ENCODE measurements at regions of chr22 and their contacts with region 1.

Region 1: GRCh38 chr22:20156611-20157429 is 6.0 kb upstream of the CCDC188 start:
- DNase-seq: peak; percentile 46
- H3K4me3 ChIP-seq: no peak overlapping the region
- H3K27ac ChIP-seq: no peak overlapping the region
- H3K4me1 ChIP-seq: peaks cover 9% of the 10 kb centered on the region
- H3K27me3 ChIP-seq: no peaks in the 10 kb centered on the region
- CTCF ChIP-seq: peak; percentile 91 to 98

Region 2: GRCh38 chr22:20268279-20269012 is 111.6 kb after region 1 on chr22 and contains the start of gene RTN4R:
- CTCF ChIA-PET with region 1: no interaction called
- dilution Hi-C with region 1: no loop called
- in situ Hi-C with region 1: no loop called
- intact Hi-C with region 1: loop called (anchors 1 kb)
- DNase-seq: peak; percentile 41
- H3K4me3 ChIP-seq: peak within 1 kb of the TSS; percentile 59 to 60 (median 60)
- H3K27ac ChIP-seq: no peak within 1 kb of the TSS
- H3K4me1 ChIP-seq: peaks cover 6% of the 10 kb centered on the region
- H3K27me3 ChIP-seq: no peaks in the 10 kb centered on the region
- CTCF ChIP-seq: peak; percentile 34 to 56
- total RNA-seq, gene RTN4R: 3.8 to 10.5 TPM

Region 3: DNA sequence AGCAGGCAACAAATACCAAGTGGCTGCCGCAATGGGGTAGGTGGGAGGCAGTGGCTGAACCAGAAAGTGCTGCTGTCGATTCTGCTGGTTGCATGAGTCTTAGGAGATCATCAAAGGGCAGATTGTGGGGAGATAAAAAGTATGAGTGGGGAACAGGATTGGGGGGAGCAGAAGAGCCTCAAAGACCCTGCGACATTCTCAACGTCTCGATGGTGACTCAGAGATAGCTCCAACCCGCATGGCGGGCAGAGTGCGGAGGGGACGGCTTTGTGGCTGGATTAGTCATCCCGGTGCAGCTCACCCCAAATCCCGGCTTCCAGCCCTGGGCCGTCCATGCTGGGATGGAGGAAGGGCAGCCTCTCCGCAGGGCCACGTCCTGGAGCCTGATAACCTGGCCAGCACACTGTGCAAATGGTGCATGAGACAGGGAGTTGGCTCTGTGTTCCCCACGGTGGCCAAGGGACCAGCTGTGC is 122.9 kb after region 1 on chr22:
- CTCF ChIA-PET with region 1: no interaction called
- dilution Hi-C with region 1: no loop called
- in situ Hi-C with region 1: loop called in 1 of 2 experiments (anchors 5 kb)
- intact Hi-C with region 1: no loop called
- DNase-seq: no peak
- H3K4me3 ChIP-seq: no peak overlapping the region
- H3K27ac ChIP-seq: no peak overlapping the region
- H3K4me1 ChIP-seq: no peaks in the 10 kb centered on the region
- H3K27me3 ChIP-seq: no peaks in the 10 kb centered on the region
- CTCF ChIP-seq: no peak

Region 4: GRCh38 chr22:20298803-20299735 is 142.2 kb after region 1 on chr22:
- CTCF ChIA-PET with region 1: no interaction called
- dilution Hi-C with region 1: no loop called
- in situ Hi-C with region 1: loop called in 1 of 2 experiments (anchors 10 kb)
- intact Hi-C with region 1: no loop called
- DNase-seq: peak; percentile 77
- H3K4me3 ChIP-seq: peak overlapping the region; percentile 37 to 50 (median 44)
- H3K27ac ChIP-seq: no peak overlapping the region
- H3K4me1 ChIP-seq: no peaks in the 10 kb centered on the region
- H3K27me3 ChIP-seq: no peaks in the 10 kb centered on the region
- CTCF ChIP-seq: no peak

Region 5: GRCh38 chr22:20456064-20456721 is 299.4 kb after region 1 on chr22:
- CTCF ChIA-PET with region 1: no interaction called
- dilution Hi-C with region 1: no loop called
- in situ Hi-C with region 1: no loop called
- intact Hi-C with region 1: loop called (anchors 1 kb)
- DNase-seq: peak; percentile 48
- H3K4me3 ChIP-seq: no peak overlapping the region
- H3K27ac ChIP-seq: no peak overlapping the region
- H3K4me1 ChIP-seq: no peaks in the 10 kb centered on the region
- H3K27me3 ChIP-seq: no peaks in the 10 kb centered on the region
- CTCF ChIP-seq: peak; percentile 85 to 91

Region 6: GRCh38 chr22:20495861-20496681 is 339.3 kb after region 1 on chr22:
- CTCF ChIA-PET with region 1: no interaction called
- dilution Hi-C with region 1: no loop called
- in situ Hi-C with region 1: no loop called
- intact Hi-C with region 1: loop called (anchors 1 kb)
- DNase-seq: peak; percentile 92
- H3K4me3 ChIP-seq: peak overlapping the region; percentile 49 to 60 (median 54)
- H3K27ac ChIP-seq: peak overlapping the region; percentile 77
- H3K4me1 ChIP-seq: peaks cover 16% of the 10 kb centered on the region
- H3K27me3 ChIP-seq: no peaks in the 10 kb centered on the region
- CTCF ChIP-seq: peak; percentile 81 to 86

Region 7: GRCh38 chr22:20606041-20606783 is 449.4 kb after region 1 on chr22:
- CTCF ChIA-PET with region 1: no interaction called
- dilution Hi-C with region 1: no loop called
- in situ Hi-C with region 1: no loop called
- intact Hi-C with region 1: loop called (anchors 5 kb)
- DNase-seq: peak; percentile 79
- H3K4me3 ChIP-seq: no peak overlapping the region
- H3K27ac ChIP-seq: no peak overlapping the region
- H3K4me1 ChIP-seq: peaks cover 6% of the 10 kb centered on the region
- H3K27me3 ChIP-seq: no peaks in the 10 kb centered on the region
- CTCF ChIP-seq: peak; percentile 78 to 95

Measured in mammary epithelial cell (primary cell).